GM13976 (cell line): ENCODE measurements at regions of chr4 and their contacts with region 1.

Region 1: DNA sequence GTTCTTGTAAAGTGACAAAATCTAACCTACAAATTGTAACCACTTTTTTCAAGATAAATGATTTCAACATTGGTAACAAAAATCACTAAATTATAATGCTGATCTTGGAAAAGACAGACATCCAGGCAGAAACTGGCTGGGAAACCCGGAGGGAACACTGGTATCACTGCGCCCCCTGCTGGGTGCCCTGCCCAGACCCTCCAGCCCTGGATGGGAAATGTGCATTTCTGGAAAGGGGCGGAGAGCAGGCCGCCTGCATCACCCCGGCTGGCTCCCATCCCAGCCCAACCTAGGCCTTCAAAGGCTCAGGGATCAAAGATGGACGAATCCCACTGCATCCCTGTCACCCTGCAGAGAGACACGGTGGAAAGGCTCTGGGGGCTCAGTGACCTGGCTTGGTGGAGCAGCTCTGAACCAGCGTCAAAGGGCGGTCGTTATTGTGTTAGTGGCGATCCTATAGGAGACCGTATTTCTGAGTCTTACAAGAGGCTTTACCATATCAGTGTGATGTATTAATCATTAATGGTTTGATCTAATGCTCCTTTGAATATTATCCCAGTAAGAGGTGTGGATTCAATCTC is 37.3 kb downstream of the ACOX3 start:
- DNase-seq: peak; percentile 83
- CTCF ChIP-seq: peak; percentile 83

Region 2: GRCh38 chr4:8241895-8242696 is 161.2 kb before region 1 on chr4:
- in situ Hi-C with region 1: loop called (anchors 10 kb)
- DNase-seq: peak; percentile 95
- CTCF ChIP-seq: peak; percentile 83